CD8-positive, alpha-beta memory T cell (primary cell): ENCODE measurements at regions of chr6 and their contacts with region 1.

Region 1: GRCh38 chr6:106512048-106512967 is 117.0 kb downstream of the RTN4IP1 start:
- DNase-seq: peak; percentile 71 to 88 (median 78)
- H3K4me3 ChIP-seq: peak overlapping the region; percentile 82
- H3K4me3 Mint-ChIP-seq: peak overlapping the region; percentile 94 to 98 (median 97)
- H3K27ac ChIP-seq: peak overlapping the region; percentile 74
- H3K27ac Mint-ChIP-seq: peak overlapping the region; percentile 96 to 99 (median 98)
- H3K4me1 ChIP-seq: peaks cover 34% of the 10 kb centered on the region
- H3K4me1 Mint-ChIP-seq: peaks cover 52 to 63% (median 62%) of the 10 kb centered on the region in 3 donors
- H3K27me3 ChIP-seq: no peaks in the 10 kb centered on the region
- H3K27me3 Mint-ChIP-seq: no peaks in the 10 kb centered on the region

Region 2: DNA sequence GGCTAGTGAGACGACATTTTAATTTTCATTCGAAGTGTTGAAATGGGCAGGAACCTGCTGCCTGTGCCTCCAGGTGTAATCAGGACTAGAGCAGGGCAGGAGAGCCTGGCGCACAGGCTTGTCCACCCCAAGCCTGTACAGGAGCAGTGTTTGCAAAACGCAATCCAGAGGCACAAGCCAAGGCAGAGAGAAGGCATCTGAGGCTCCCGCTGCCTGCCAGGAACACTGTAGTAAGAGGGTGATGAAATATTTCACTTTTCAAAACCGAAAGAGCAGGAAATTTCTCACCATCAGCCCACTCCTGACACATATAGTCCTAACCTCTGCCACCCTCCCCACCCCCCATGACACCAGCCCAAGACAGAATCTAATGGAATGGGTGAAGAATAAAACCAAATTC is 15.5 kb before region 1 on chr6:
- CTCF ChIA-PET with region 1: interaction called, 10 read pairs
- POLR2A ChIA-PET with region 1: no interaction called
- DNase-seq: no peak
- H3K4me3 ChIP-seq: no peak overlapping the region
- H3K4me3 Mint-ChIP-seq: no peak overlapping the region
- H3K27ac ChIP-seq: no peak overlapping the region
- H3K27ac Mint-ChIP-seq: no peak overlapping the region
- H3K4me1 ChIP-seq: no peaks in the 10 kb centered on the region
- H3K4me1 Mint-ChIP-seq: no peaks in the 10 kb centered on the region
- H3K27me3 ChIP-seq: peaks cover 4% of the 10 kb centered on the region
- H3K27me3 Mint-ChIP-seq: no peaks in the 10 kb centered on the region

Region 3: DNA sequence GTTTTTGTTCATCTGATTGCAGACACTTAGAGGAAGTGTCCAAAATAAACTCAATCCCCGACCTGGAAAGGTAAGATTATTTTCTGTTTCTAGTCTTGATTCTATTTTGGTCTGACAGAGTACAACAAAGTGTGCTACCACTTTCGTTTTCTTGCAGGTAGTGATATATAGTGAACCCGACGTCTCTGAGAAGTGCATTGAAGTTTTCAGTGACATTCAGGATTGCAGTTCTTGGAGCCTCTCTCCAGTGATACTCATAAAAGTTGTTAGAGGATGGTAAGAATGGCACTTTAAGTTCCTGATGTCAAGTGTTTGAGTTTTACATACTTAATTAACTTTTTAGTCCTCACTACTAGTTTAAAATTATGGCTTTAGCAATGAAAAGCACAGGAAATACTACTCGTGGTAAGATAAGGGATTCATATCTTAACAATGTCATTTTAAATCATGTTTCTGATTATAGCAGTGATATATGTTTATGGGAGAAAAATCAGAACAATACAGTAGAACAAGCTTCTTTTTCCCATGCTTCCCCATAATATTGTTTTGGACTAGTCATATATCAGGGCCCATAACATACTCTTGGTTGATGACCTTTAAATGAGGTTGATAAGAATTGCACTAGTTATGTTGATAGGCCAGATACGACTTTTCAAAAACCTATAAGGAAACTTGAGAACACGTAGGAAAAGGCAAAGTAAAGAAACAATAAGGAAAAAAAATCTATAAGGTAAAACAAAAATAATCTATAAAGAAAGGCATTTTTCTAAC is 13.0 kb after region 1 on chr6:
- CTCF ChIA-PET with region 1: interaction called, 147 read pairs
- POLR2A ChIA-PET with region 1: interaction called, 60 read pairs
- DNase-seq: peak in 2 of 5 donors; percentile 47 to 53
- H3K4me3 ChIP-seq: peak overlapping the region; percentile 51
- H3K4me3 Mint-ChIP-seq: peak overlapping the region; percentile 90 to 95 (median 93)
- H3K27ac ChIP-seq: no peak overlapping the region
- H3K27ac Mint-ChIP-seq: peak overlapping the region; percentile 82 to 99 (median 96)
- H3K4me1 ChIP-seq: peaks cover 17% of the 10 kb centered on the region
- H3K4me1 Mint-ChIP-seq: peaks cover 52 to 88% (median 82%) of the 10 kb centered on the region in 3 donors
- H3K27me3 ChIP-seq: no peaks in the 10 kb centered on the region
- H3K27me3 Mint-ChIP-seq: no peaks in the 10 kb centered on the region

Region 4: GRCh38 chr6:106530502-106530901 is 18.2 kb after region 1 on chr6:
- CTCF ChIA-PET with region 1: interaction called, 147 read pairs
- POLR2A ChIA-PET with region 1: interaction called, 36 read pairs
- DNase-seq: no peak
- H3K4me3 ChIP-seq: no peak overlapping the region
- H3K4me3 Mint-ChIP-seq: no peak overlapping the region
- H3K27ac ChIP-seq: no peak overlapping the region
- H3K27ac Mint-ChIP-seq: peak overlapping the region in 1 of 8 donors; percentile 23
- H3K4me1 ChIP-seq: peaks cover 29% of the 10 kb centered on the region
- H3K4me1 Mint-ChIP-seq: peaks cover 63 to 90% (median 89%) of the 10 kb centered on the region in 3 donors
- H3K27me3 ChIP-seq: no peaks in the 10 kb centered on the region
- H3K27me3 Mint-ChIP-seq: peaks cover 0 to 1% of the 10 kb centered on the region in 2 donors

Region 5: DNA sequence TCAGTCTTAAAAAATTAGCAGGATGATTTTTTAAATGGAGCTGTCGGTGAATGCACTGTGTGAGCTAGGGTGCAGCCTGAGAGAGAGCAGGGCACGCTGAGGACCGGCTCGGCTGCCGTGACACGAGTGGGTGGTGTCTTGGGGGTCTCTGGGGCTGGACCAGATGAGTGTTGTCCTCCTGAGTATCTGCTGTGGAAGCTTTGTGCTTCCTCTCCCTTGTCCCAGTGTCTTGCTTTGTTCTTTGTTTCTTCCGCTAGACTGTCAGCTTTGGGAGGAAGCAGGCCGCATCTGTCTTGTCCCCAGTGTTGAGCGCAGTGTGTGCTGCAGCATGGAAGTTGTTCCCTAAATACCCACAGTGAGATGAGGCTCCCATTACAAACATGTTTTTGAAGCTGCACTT is 27.6 kb after region 1 on chr6:
- CTCF ChIA-PET with region 1: interaction called, 26 read pairs
- POLR2A ChIA-PET with region 1: interaction called, 6 read pairs
- DNase-seq: no peak
- H3K4me3 ChIP-seq: no peak overlapping the region
- H3K4me3 Mint-ChIP-seq: no peak overlapping the region
- H3K27ac ChIP-seq: no peak overlapping the region
- H3K27ac Mint-ChIP-seq: peak overlapping the region in 7 of 8 donors; percentile 12 to 95 (median 72)
- H3K4me1 ChIP-seq: peaks cover 24% of the 10 kb centered on the region
- H3K4me1 Mint-ChIP-seq: peaks cover 35 to 60% (median 56%) of the 10 kb centered on the region in 3 donors
- H3K27me3 ChIP-seq: no peaks in the 10 kb centered on the region
- H3K27me3 Mint-ChIP-seq: no peaks in the 10 kb centered on the region

Region 6: GRCh38 chr6:106546261-106546690 is 34.0 kb after region 1 on chr6:
- CTCF ChIA-PET with region 1: interaction called, 16 read pairs
- POLR2A ChIA-PET with region 1: no interaction called
- DNase-seq: no peak
- H3K4me3 ChIP-seq: no peak overlapping the region
- H3K4me3 Mint-ChIP-seq: peak overlapping the region in 1 of 7 donors; percentile 9
- H3K27ac ChIP-seq: no peak overlapping the region
- H3K27ac Mint-ChIP-seq: peak overlapping the region in 7 of 8 donors; percentile 17 to 72 (median 50)
- H3K4me1 ChIP-seq: peaks cover 12% of the 10 kb centered on the region
- H3K4me1 Mint-ChIP-seq: peaks cover 25 to 46% (median 38%) of the 10 kb centered on the region in 3 donors
- H3K27me3 ChIP-seq: no peaks in the 10 kb centered on the region
- H3K27me3 Mint-ChIP-seq: no peaks in the 10 kb centered on the region

Region 7: GRCh38 chr6:106556368-106556960 is 44.2 kb after region 1 on chr6:
- CTCF ChIA-PET with region 1: interaction called, 29 read pairs
- POLR2A ChIA-PET with region 1: interaction called, 13 read pairs
- DNase-seq: peak in 2 of 5 donors; percentile 24 to 42
- H3K4me3 ChIP-seq: no peak overlapping the region
- H3K4me3 Mint-ChIP-seq: no peak overlapping the region
- H3K27ac ChIP-seq: no peak overlapping the region
- H3K27ac Mint-ChIP-seq: peak overlapping the region in 1 of 8 donors; percentile 45
- H3K4me1 ChIP-seq: no peaks in the 10 kb centered on the region
- H3K4me1 Mint-ChIP-seq: peaks cover 0 to 6% (median 2%) of the 10 kb centered on the region in 3 donors
- H3K27me3 ChIP-seq: no peaks in the 10 kb centered on the region
- H3K27me3 Mint-ChIP-seq: no peaks in the 10 kb centered on the region